ENCODE measurements at regions of chr12 and their contacts with region 1.

Region 1: GRCh38 chr12:49121047-49121696 is 10.0 kb downstream of the TUBA1B start:
- DNase-seq: peak in 2 of 4 donors; percentile 16 to 51
- ATAC-seq: peak; percentile 92
- H3K4me3 ChIP-seq: no peak overlapping the region
- H3K27ac ChIP-seq: no peak overlapping the region
- H3K4me1 ChIP-seq: no peaks in the 10 kb centered on the region
- H3K27me3 ChIP-seq: no peaks in the 10 kb centered on the region
- CTCF ChIP-seq: peak; percentile 47 to 53

Region 2: DNA sequence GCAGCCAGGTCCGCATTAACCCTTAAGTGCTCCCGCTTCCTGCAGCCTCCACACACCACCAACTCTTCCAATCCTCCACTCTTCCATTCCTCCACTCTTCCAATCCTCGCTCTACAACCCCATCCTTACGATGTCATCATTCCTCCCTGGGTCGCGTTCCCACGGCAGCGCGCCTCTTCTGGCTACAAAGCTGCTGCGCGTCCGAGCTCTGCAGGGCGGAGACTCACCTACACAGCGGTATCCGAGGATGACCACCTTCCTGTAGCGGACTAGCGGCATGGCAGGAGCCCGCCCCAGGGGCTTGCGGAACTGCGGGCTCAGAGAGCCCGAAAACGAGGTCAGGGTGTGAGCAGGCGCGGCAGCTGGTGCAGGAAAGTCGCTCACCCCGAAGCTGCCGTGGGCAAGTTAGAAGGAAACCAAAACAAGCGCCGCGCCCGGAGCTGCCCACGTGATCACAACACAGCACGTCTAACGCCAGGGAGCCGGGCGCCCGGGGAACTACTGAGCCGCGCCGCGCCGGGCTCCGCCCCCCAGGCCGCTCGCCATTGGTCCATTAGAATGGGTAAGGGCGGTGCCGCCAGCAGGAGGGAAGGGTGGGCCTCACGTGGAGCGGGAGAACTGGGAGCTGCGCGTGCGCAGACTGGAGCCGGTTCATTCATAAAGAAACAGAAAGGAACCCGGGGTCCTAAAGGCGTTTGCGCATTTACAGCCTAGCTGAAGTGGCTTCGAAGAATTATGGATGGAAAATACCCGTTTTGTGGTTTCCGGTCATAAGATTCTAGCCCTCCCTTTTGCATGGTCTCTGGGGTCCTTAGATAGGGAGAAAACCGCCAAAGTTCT is 51.4 kb before region 1 on chr12 and contains the start of gene RHEBL1:
- intact Hi-C with region 1: loop called in 1 of 2 experiments (anchors 10 kb)
- DNase-seq: peak; percentile 93 to 100 (median 98)
- ATAC-seq: peak; percentile 100
- H3K4me3 ChIP-seq: peak within 1 kb of the TSS; percentile 57 to 76
- H3K27ac ChIP-seq: peak within 1 kb of the TSS; percentile 27 to 84
- H3K4me1 ChIP-seq: peaks cover 8 to 16% of the 10 kb centered on the region in 2 donors
- H3K27me3 ChIP-seq: no peaks in the 10 kb centered on the region
- CTCF ChIP-seq: no peak
- polyA plus RNA-seq, gene RHEBL1: 1.9 to 3.6 (median 2.4) TPM

Region 3: GRCh38 chr12:49088190-49088931 is 32.8 kb before region 1 on chr12:
- intact Hi-C with region 1: loop called in 1 of 2 experiments (anchors 5 kb)
- DNase-seq: peak; percentile 77 to 91 (median 84)
- ATAC-seq: peak; percentile 97
- H3K4me3 ChIP-seq: no peak overlapping the region
- H3K27ac ChIP-seq: no peak overlapping the region
- H3K4me1 ChIP-seq: peaks cover 13 to 56% of the 10 kb centered on the region in 2 donors
- H3K27me3 ChIP-seq: peaks cover 44 to 52% of the 10 kb centered on the region in 2 donors
- CTCF ChIP-seq: peak; percentile 91 to 93